ENCODE measurements at regions of chr4 and their contacts with region 1.

Region 1: GRCh38 chr4:40687676-40688389 is 58.2 kb upstream of the RBM47 start:
- DNase-seq: no peak
- H3K4me3 Mint-ChIP-seq: peak overlapping the region; percentile 50
- H3K27ac Mint-ChIP-seq: peak overlapping the region; percentile 94
- H3K4me1 Mint-ChIP-seq: peaks cover 20% of the 10 kb centered on the region
- H3K27me3 Mint-ChIP-seq: no peaks in the 10 kb centered on the region

Region 2: GRCh38 chr4:40662962-40663604 is 24.8 kb before region 1 on chr4:
- intact Hi-C with region 1: loop called (anchors 1 kb)
- DNase-seq: no peak
- H3K4me3 Mint-ChIP-seq: peak overlapping the region; percentile 36
- H3K27ac Mint-ChIP-seq: peak overlapping the region; percentile 93
- H3K4me1 Mint-ChIP-seq: peaks cover 29% of the 10 kb centered on the region
- H3K27me3 Mint-ChIP-seq: no peaks in the 10 kb centered on the region

Region 3: GRCh38 chr4:40699648-40700047 is 11.8 kb after region 1 on chr4:
- intact Hi-C with region 1: loop called (anchors 1 kb)
- DNase-seq: no peak
- H3K4me3 Mint-ChIP-seq: peak overlapping the region; percentile 4
- H3K27ac Mint-ChIP-seq: peak overlapping the region; percentile 67
- H3K4me1 Mint-ChIP-seq: peaks cover 26% of the 10 kb centered on the region
- H3K27me3 Mint-ChIP-seq: no peaks in the 10 kb centered on the region

Region 4: DNA sequence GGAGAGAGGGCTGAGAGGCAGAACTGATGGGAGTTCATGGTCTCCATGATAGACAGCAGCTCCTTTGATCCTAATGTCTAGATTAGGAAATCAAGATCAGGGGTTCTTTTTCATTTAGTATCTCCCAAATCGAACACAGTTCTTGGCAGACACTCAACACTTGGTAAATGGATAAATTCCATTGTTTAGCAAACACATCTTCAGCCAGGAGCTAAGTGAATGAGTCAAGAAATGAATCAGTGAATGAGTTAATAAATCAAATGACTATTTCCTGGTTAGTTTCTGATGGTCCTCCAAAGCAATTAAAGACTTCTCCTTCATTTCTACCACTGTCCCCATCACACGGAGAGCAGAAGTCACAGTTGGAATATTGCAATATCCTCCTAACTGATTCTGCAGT is 1589.5 kb after region 1 on chr4:
- intact Hi-C with region 1: no loop called
- DNase-seq: no peak
- H3K4me3 Mint-ChIP-seq: no peak overlapping the region
- H3K27ac Mint-ChIP-seq: no peak overlapping the region
- H3K4me1 Mint-ChIP-seq: peaks cover 2% of the 10 kb centered on the region
- H3K27me3 Mint-ChIP-seq: no peaks in the 10 kb centered on the region

Measured in activated CD4-positive, alpha-beta T cell treated with anti-CD3 and anti-CD28 coated beads, Interleukin-2, amount 10 ng/mL, durations not matched to agents 24 days and 14 days (primary cell).